T-cell (primary cell): ENCODE measurements at regions of chr22 and their contacts with region 1.

Region 1: GRCh38 chr22:50562523-50563412 is at the start of gene SYCE3:
- DNase-seq: peak; percentile 89 to 98 (median 96)
- ATAC-seq: peak; percentile 93 to 98 (median 95)
- H3K4me3 ChIP-seq: peak within 1 kb of the TSS; percentile 81 to 83
- H3K4me3 Mint-ChIP-seq: peak within 1 kb of the TSS; percentile 90 to 93 (median 90)
- H3K27ac ChIP-seq: peak within 1 kb of the TSS; percentile 52
- H3K27ac Mint-ChIP-seq: peak within 1 kb of the TSS; percentile 88 to 89
- H3K4me1 ChIP-seq: peaks cover 0 to 17% of the 10 kb centered on the region in 2 experiments
- H3K4me1 Mint-ChIP-seq: peaks cover 17 to 20% (median 17%) of the 10 kb centered on the region in 3 donors
- H3K27me3 ChIP-seq: peaks cover 0 to 5% of the 10 kb centered on the region in 2 experiments
- H3K27me3 Mint-ChIP-seq: no peaks in the 10 kb centered on the region
- total RNA-seq, gene SYCE3: not detected

Region 2: GRCh38 chr22:50581031-50581949 is 18.5 kb after region 1 on chr22:
- CTCF ChIA-PET with region 1: interaction called, 4 to 10 read pairs
- POLR2A ChIA-PET with region 1: no interaction called
- DNase-seq: no peak
- ATAC-seq: no peak
- H3K4me3 ChIP-seq: peak overlapping the region; percentile 68 to 75
- H3K4me3 Mint-ChIP-seq: peak overlapping the region; percentile 84 to 93 (median 84)
- H3K27ac ChIP-seq: peak overlapping the region; percentile 81
- H3K27ac Mint-ChIP-seq: peak overlapping the region; percentile 65 to 82
- H3K4me1 ChIP-seq: peaks cover 8 to 37% of the 10 kb centered on the region in 2 experiments
- H3K4me1 Mint-ChIP-seq: peaks cover 24 to 40% (median 32%) of the 10 kb centered on the region in 3 donors
- H3K27me3 ChIP-seq: no peaks in the 10 kb centered on the region
- H3K27me3 Mint-ChIP-seq: no peaks in the 10 kb centered on the region

Region 3: GRCh38 chr22:50620593-50621355 is 58.0 kb after region 1 on chr22:
- CTCF ChIA-PET with region 1: interaction called in 1 of 2 experiments, 13 read pairs
- POLR2A ChIA-PET with region 1: interaction called in 1 of 2 experiments, 5 read pairs
- DNase-seq: peak; percentile 44 to 97 (median 91)
- ATAC-seq: peak; percentile 67 to 77 (median 73)
- H3K4me3 ChIP-seq: peak overlapping the region; percentile 60 to 77
- H3K4me3 Mint-ChIP-seq: peak overlapping the region; percentile 88 to 90 (median 90)
- H3K27ac ChIP-seq: peak overlapping the region; percentile 96
- H3K27ac Mint-ChIP-seq: peak overlapping the region; percentile 97 to 99
- H3K4me1 ChIP-seq: peaks cover 26 to 40% of the 10 kb centered on the region in 2 experiments
- H3K4me1 Mint-ChIP-seq: peaks cover 36 to 40% (median 39%) of the 10 kb centered on the region in 3 donors
- H3K27me3 ChIP-seq: no peaks in the 10 kb centered on the region
- H3K27me3 Mint-ChIP-seq: no peaks in the 10 kb centered on the region

Region 4: GRCh38 chr22:50633086-50633485 is 70.3 kb after region 1 on chr22:
- CTCF ChIA-PET with region 1: no interaction called
- POLR2A ChIA-PET with region 1: no interaction called
- DNase-seq: no peak
- ATAC-seq: no peak
- H3K4me3 ChIP-seq: no peak overlapping the region
- H3K4me3 Mint-ChIP-seq: no peak overlapping the region
- H3K27ac ChIP-seq: no peak overlapping the region
- H3K27ac Mint-ChIP-seq: no peak overlapping the region
- H3K4me1 ChIP-seq: peaks cover 5 to 9% of the 10 kb centered on the region in 2 experiments
- H3K4me1 Mint-ChIP-seq: peaks cover 17 to 23% (median 22%) of the 10 kb centered on the region in 3 donors
- H3K27me3 ChIP-seq: peaks cover 0 to 4% of the 10 kb centered on the region in 2 experiments
- H3K27me3 Mint-ChIP-seq: no peaks in the 10 kb centered on the region